Activated CD4-positive, alpha-beta memory T cell treated with anti-CD3 and anti-CD28 coated beads for 36 hours (primary cell): ENCODE measurements at regions of chr7 and their contacts with region 1.

Region 1: DNA sequence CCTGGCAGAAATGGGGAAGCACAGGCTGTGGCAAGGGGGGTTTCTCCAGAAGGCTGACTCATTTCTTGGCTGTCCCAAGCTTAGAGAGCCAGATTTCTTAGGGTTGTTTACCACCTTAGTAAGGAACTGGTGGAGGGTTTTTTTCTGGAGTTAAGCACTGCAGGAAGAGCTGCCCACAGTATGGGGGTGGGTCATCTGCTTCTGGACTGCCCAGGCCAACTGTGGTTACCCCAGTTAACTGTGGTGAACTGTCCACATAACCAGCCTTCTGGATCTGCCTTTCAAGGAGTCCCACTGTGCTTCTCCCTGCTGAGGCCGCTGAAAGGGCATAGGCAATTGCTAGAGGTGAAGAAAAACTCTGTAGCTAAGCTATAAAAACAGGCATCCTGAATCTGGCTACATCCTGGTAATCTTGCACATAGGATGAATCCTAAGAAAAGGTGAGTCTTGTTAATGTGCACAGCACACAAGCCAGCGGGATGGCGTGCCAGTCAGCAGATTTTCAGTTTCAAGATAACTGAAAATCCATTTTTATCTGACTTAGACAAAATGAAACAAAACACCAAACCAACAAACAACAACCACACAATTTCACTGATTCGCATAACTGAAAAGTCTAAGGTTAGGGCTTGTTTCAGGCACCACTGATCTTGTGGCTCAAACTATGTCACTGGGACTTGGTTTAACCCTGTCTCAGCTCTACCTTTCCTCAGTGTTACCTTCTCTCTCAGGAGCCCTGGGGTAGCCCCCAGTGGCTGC is 21.6 kb upstream of the TSPAN33 start:
- DNase-seq: peak; percentile 72
- H3K4me3 Mint-ChIP-seq: peak overlapping the region; percentile 21
- H3K27ac Mint-ChIP-seq: peak overlapping the region; percentile 72
- H3K4me1 Mint-ChIP-seq: peaks cover 28% of the 10 kb centered on the region
- H3K27me3 Mint-ChIP-seq: peaks cover 16% of the 10 kb centered on the region

Region 2: DNA sequence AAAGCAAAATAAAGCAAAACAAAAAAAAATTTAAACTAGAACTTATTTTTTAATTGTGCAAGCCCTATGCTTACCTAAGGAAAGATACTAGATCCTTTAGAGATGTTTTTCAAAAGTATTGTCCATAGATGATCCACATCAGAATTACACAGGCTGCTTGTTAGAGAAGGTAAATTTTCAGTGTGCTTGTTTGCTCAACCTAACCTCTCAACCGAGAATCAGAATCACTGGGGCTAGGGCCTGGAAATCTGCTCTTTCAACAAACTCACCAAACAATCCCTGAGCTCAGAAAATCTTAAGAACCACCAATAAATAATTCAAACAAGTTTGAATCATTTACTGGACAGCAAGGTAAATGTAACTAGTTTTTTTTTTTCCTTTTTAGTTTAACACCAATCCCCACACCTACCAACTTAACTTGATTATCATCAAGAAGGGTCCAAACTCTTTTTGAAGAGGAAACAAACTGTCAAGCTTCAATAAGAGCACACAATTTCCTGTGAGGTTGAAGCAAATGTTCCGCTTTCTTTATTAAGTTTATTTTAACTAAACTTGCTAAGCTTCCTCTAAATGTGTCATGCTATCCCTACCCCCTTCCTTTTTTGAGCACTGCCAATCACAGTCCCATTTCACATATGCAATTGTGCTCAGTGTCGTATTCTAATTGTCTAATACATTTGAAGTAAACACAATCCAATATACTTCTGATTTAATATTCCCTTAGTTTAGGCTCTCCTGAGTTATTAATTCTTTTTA is 14.1 kb after region 1 on chr7:
- CTCF ChIA-PET with region 1: no interaction called
- POLR2A ChIA-PET with region 1: no interaction called
- intact Hi-C with region 1: loop called (anchors 1 kb)
- DNase-seq: no peak
- H3K4me3 Mint-ChIP-seq: no peak overlapping the region
- H3K27ac Mint-ChIP-seq: peak overlapping the region; percentile 82
- H3K4me1 Mint-ChIP-seq: peaks cover 23% of the 10 kb centered on the region
- H3K27me3 Mint-ChIP-seq: no peaks in the 10 kb centered on the region

Region 3: GRCh38 chr7:129169171-129169671 is 46.3 kb after region 1 on chr7:
- CTCF ChIA-PET with region 1: no interaction called
- POLR2A ChIA-PET with region 1: no interaction called
- intact Hi-C with region 1: loop called (anchors 2 kb)
- DNase-seq: peak; percentile 40
- H3K4me3 Mint-ChIP-seq: peak overlapping the region; percentile 57
- H3K27ac Mint-ChIP-seq: no peak overlapping the region
- H3K4me1 Mint-ChIP-seq: peaks cover 11% of the 10 kb centered on the region
- H3K27me3 Mint-ChIP-seq: peaks cover 15% of the 10 kb centered on the region